ENCODE measurements at regions of chr4 and their contacts with region 1.

Region 1: DNA sequence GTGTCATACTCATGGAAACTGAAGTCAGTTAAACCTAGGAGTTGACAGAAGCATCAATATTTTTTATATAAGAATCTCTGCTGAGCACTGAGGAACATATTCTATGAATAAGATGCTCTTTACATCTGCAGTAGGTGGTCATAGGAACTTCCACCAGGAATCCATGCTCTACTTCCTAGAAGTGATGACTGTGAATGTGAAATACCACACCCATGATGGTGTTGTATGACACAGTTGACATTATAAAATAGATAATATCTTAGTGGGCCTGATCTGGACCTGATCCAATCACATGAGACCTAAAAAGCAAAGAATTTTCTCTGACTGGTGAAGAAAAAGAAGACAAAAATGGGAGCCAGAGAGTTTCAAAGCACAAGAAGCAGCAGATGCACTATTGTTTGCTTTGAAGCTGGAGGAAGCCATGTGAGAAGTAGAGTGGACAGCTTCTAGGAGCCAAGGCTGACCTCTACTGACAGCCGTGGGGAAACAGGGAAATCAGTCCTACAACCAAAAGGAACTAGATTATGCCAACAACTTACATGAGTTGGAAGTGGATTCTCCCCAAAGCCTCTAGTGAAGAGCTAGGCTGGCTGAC is 68.6 kb upstream of the HS3ST1 start:
- DNase-seq: no peak
- ATAC-seq: no peak
- H3K4me3 ChIP-seq: no peak overlapping the region
- H3K27ac ChIP-seq: no peak overlapping the region
- H3K4me1 ChIP-seq: no peaks in the 10 kb centered on the region
- H3K27me3 ChIP-seq: no peaks in the 10 kb centered on the region
- CTCF ChIP-seq: no peak
- EP300 ChIP-seq: no peak
- POLR2A ChIP-seq: no peak
- RAD21 ChIP-seq: no peak

Region 2: GRCh38 chr4:11252149-11252548 is 245.2 kb before region 1 on chr4:
- CTCF ChIA-PET with region 1: no interaction called
- POLR2A ChIA-PET with region 1: no interaction called
- in situ Hi-C with region 1: no loop called
- intact Hi-C with region 1: loop called (anchors 5 kb)
- DNase-seq: no peak
- ATAC-seq: no peak
- H3K4me3 ChIP-seq: no peak overlapping the region
- H3K27ac ChIP-seq: no peak overlapping the region
- H3K4me1 ChIP-seq: 0 out of 2 replicates have a peak, but pooled peaks cover 6% of the 10 kb centered on the region
- H3K27me3 ChIP-seq: no peaks in the 10 kb centered on the region; a peak in 1 of 5 replicates
- CTCF ChIP-seq: no peak
- EP300 ChIP-seq: no peak
- POLR2A ChIP-seq: no peak
- RAD21 ChIP-seq: no peak

Region 3: GRCh38 chr4:11480683-11481082 is 16.6 kb before region 1 on chr4:
- CTCF ChIA-PET with region 1: no interaction called
- POLR2A ChIA-PET with region 1: no interaction called
- in situ Hi-C with region 1: no loop called
- intact Hi-C with region 1: no loop called
- DNase-seq: no peak
- ATAC-seq: no peak
- H3K4me3 ChIP-seq: no peak overlapping the region
- H3K27ac ChIP-seq: no peak overlapping the region
- H3K4me1 ChIP-seq: no peaks in the 10 kb centered on the region
- H3K27me3 ChIP-seq: no peaks in the 10 kb centered on the region
- CTCF ChIP-seq: no peak
- EP300 ChIP-seq: no peak
- POLR2A ChIP-seq: no peak
- RAD21 ChIP-seq: no peak

Region 4: GRCh38 chr4:11842620-11843263 is 345.4 kb after region 1 on chr4:
- CTCF ChIA-PET with region 1: no interaction called
- POLR2A ChIA-PET with region 1: no interaction called
- in situ Hi-C with region 1: no loop called
- intact Hi-C with region 1: no loop called
- DNase-seq: no peak
- ATAC-seq: no peak
- H3K4me3 ChIP-seq: no peak overlapping the region
- H3K27ac ChIP-seq: no peak overlapping the region
- H3K4me1 ChIP-seq: no peaks in the 10 kb centered on the region
- H3K27me3 ChIP-seq: no peaks in the 10 kb centered on the region
- CTCF ChIP-seq: no peak
- EP300 ChIP-seq: no peak
- POLR2A ChIP-seq: no peak
- RAD21 ChIP-seq: no peak

Measured in HepG2 (cell line).